ENCODE measurements at regions of chr6 and their contacts with region 1.

Region 1: GRCh38 chr6:7550433-7550801 is 8.9 kb downstream of the DSP start:
- DNase-seq: peak; percentile 63
- H3K4me3 Mint-ChIP-seq: peak overlapping the region; percentile 31
- H3K27ac Mint-ChIP-seq: peak overlapping the region; percentile 57
- H3K4me1 Mint-ChIP-seq: peaks cover 62% of the 10 kb centered on the region
- H3K27me3 Mint-ChIP-seq: no peaks in the 10 kb centered on the region
- CTCF ChIP-seq: no peak

Region 2: GRCh38 chr6:7424967-7425807 is 125.2 kb before region 1 on chr6:
- CTCF ChIA-PET with region 1: interaction called, 9 read pairs
- POLR2A ChIA-PET with region 1: interaction called, 19 read pairs
- intact Hi-C with region 1: loop called (anchors 1 kb)
- DNase-seq: peak; percentile 80
- H3K4me3 Mint-ChIP-seq: no peak overlapping the region
- H3K27ac Mint-ChIP-seq: no peak overlapping the region
- H3K4me1 Mint-ChIP-seq: no peaks in the 10 kb centered on the region
- H3K27me3 Mint-ChIP-seq: no peaks in the 10 kb centered on the region
- CTCF ChIP-seq: peak; percentile 61

Region 3: GRCh38 chr6:7468382-7469081 is 81.9 kb before region 1 on chr6:
- CTCF ChIA-PET with region 1: no interaction called
- POLR2A ChIA-PET with region 1: interaction called, 15 read pairs
- intact Hi-C with region 1: no loop called
- DNase-seq: peak; percentile 77
- H3K4me3 Mint-ChIP-seq: peak overlapping the region; percentile 72
- H3K27ac Mint-ChIP-seq: peak overlapping the region; percentile 83
- H3K4me1 Mint-ChIP-seq: peaks cover 30% of the 10 kb centered on the region
- H3K27me3 Mint-ChIP-seq: no peaks in the 10 kb centered on the region
- CTCF ChIP-seq: no peak

Measured in MCF 10A (cell line).